GM12878 (cell line): ENCODE measurements at regions of chr15 and their contacts with region 1.

Region 1: DNA sequence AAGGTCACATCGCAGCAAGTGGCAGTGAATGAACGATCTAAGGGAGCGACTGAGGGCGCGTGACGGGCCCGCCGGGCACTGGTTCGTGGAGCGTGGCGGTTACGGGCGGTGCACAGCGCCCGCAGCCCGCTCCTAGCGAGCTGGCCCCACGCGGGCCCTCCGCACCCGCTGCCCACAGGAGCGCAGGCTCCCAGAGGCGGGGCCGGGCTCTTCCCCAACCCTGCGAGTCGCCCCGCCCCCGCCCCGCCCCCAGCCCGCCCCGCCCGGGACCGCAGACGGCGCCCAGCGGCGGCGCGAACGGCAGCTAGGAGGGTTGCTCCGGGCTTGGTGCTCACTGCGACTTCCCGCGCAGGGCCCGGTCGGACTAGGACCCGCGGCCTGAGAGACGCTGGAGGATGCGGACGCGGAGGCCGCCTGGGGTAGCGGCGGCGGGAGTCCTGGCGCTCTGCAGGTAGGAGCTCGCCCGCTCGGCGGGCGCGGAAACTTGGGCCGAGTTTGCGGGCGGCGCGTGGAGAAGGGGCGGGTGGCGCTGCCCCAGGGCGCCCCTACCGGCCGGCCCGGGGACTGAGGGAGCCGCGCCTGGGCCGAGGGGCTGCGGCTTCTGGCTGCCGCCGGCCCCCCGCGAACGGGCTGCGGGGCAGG is at the start of gene C15orf39:
- DNase-seq: no peak
- ATAC-seq: peak; percentile 55
- H3K4me3 ChIP-seq: peak within 1 kb of the TSS; percentile 88
- H3K27ac ChIP-seq: peak within 1 kb of the TSS; percentile 98
- H3K4me1 ChIP-seq: peaks cover 38% of the 10 kb centered on the region
- H3K27me3 ChIP-seq: no peaks in the 10 kb centered on the region
- CTCF ChIP-seq: peak; percentile 63 to 71 (median 65); a peak in 5 of 6 replicates
- EP300 ChIP-seq: no peak
- POLR2A ChIP-seq: peak; percentile 84
- RAD21 ChIP-seq: peak; percentile 42
- polyA plus RNA-seq, gene C15orf39: 2.3 to 4.9 TPM

Region 2: GRCh38 chr15:75029378-75030022 is 172.2 kb before region 1 on chr15:
- CTCF ChIA-PET with region 1: interaction called, 95 read pairs
- POLR2A ChIA-PET with region 1: interaction called, 15 read pairs
- RAD21 ChIA-PET with region 1: interaction called, 65 read pairs
- SMC1A ChIA-PET with region 1: interaction called, 49 read pairs
- in situ Hi-C with region 1: no loop called
- intact Hi-C with region 1: loop called (anchors 1 kb)
- DNase-seq: no peak
- ATAC-seq: peak; percentile 90
- H3K4me3 ChIP-seq: 0 out of 2 replicates have a peak overlapping the region, but pooled peaks have one; percentile 26
- H3K27ac ChIP-seq: peak overlapping the region; percentile 74
- H3K4me1 ChIP-seq: peaks cover 49% of the 10 kb centered on the region
- H3K27me3 ChIP-seq: no peaks in the 10 kb centered on the region
- CTCF ChIP-seq: peak; percentile 89 to 97 (median 92); a peak in 5 of 6 replicates
- EP300 ChIP-seq: no peak
- POLR2A ChIP-seq: no peak
- RAD21 ChIP-seq: peak; percentile 98

Region 3: DNA sequence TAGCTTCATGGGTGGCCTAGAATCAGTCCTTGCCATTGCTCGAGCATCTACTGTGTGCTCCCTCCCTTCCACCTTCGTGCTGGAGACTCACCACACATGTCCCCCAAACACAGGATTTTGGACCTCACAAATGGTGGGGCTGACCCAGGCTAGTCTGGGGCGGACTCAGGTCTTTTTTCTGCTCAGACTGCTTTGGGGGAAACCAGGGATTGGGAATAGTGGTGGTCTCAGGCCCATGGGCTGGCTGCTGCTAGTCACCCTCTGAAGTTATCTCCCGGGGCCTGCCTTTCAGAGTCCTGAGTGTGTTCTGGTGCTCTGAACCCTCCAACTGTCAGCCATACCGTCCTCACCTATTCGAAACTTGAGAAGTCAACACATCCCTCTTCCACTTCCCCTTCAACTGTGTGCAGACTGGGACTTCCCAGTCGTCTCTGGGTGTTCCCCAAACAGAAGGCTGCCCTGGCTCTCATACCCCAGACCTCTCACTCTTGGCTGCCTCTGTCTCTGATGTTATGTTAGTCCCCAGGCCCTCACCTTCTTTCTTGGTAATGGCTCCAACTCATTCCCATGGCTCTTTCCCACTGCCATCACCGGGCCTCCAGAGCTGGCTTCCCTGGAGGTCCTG is 132.3 kb before region 1 on chr15:
- CTCF ChIA-PET with region 1: interaction called, 21 read pairs
- POLR2A ChIA-PET with region 1: interaction called, 55 read pairs
- RAD21 ChIA-PET with region 1: interaction called, 44 read pairs
- SMC1A ChIA-PET with region 1: interaction called, 39 read pairs
- in situ Hi-C with region 1: no loop called
- intact Hi-C with region 1: no loop called
- DNase-seq: peak; percentile 87
- ATAC-seq: peak; percentile 92
- H3K4me3 ChIP-seq: no peak overlapping the region
- H3K27ac ChIP-seq: peak overlapping the region; percentile 89
- H3K4me1 ChIP-seq: peaks cover 58% of the 10 kb centered on the region
- H3K27me3 ChIP-seq: no peaks in the 10 kb centered on the region
- CTCF ChIP-seq: no peak
- EP300 ChIP-seq: peak; percentile 90 to 91; a peak in 3 of 4 replicates
- POLR2A ChIP-seq: peak; percentile 65
- RAD21 ChIP-seq: no peak; the same call in 1 of the 2 replicates

Region 4: DNA sequence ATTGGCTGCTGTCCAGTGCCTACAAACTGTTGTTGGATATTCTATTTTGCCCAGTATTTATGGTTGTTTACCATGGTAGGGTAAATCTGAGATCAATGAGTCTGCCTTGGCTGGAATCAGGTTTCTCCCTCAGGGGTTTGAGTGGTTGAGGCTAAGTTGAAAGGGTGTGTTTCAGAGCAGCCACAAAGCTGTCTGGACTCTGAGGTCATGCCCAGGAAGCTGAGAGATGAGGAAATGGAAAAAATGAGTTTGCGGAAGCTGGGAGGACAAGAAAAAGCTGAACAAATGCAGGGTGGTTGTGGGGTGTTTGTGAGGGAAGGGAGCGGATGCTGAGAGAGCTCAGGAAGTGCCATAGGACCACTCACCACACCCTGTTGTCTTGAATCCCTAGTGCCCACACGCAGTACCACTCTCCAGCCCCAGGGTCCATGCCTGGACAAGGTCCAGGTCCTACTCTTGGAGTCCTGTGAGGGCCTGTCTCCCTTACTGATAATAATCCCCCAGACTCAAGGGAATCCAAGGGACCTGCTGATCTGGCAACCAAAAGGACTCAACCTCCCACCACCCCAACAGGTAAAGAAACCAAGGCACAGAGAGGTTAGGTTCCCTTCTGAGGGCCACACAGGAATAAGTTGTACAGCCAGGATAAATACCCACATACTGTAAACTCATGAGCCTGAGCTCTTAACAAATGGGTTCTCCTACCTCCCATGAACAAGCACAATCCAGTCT is 96.8 kb before region 1 on chr15:
- CTCF ChIA-PET with region 1: interaction called, 10 read pairs
- POLR2A ChIA-PET with region 1: interaction called, 13 read pairs
- RAD21 ChIA-PET with region 1: interaction called, 16 read pairs
- SMC1A ChIA-PET with region 1: interaction called, 40 read pairs
- in situ Hi-C with region 1: loop called (anchors 5 kb)
- intact Hi-C with region 1: no loop called
- DNase-seq: peak; percentile 88
- ATAC-seq: peak; percentile 73
- H3K4me3 ChIP-seq: no peak overlapping the region
- H3K27ac ChIP-seq: peak overlapping the region; percentile 76
- H3K4me1 ChIP-seq: peaks cover 59% of the 10 kb centered on the region
- H3K27me3 ChIP-seq: no peaks in the 10 kb centered on the region
- CTCF ChIP-seq: 0 out of 6 replicates have a peak, but pooled peaks of 1 of the 3 experiments have one; percentile 6
- EP300 ChIP-seq: peak; percentile 61 to 76; a peak in 3 of 4 replicates
- POLR2A ChIP-seq: no peak; the same call in 1 of the 2 replicates
- RAD21 ChIP-seq: 0 out of 2 replicates have a peak, but pooled peaks have one; percentile 21

Region 5: GRCh38 chr15:75130597-75131268 is 71.0 kb before region 1 on chr15:
- CTCF ChIA-PET with region 1: interaction called, 36 read pairs
- POLR2A ChIA-PET with region 1: interaction called, 30 read pairs
- RAD21 ChIA-PET with region 1: interaction called, 34 read pairs
- SMC1A ChIA-PET with region 1: interaction called, 43 read pairs
- in situ Hi-C with region 1: loop called (anchors 5 kb)
- intact Hi-C with region 1: loop called (anchors 2 kb)
- DNase-seq: peak; percentile 89
- ATAC-seq: peak; percentile 92
- H3K4me3 ChIP-seq: peak overlapping the region; percentile 13; the same call in 1 of the 2 replicates
- H3K27ac ChIP-seq: peak overlapping the region; percentile 99
- H3K4me1 ChIP-seq: peaks cover 67% of the 10 kb centered on the region
- H3K27me3 ChIP-seq: no peaks in the 10 kb centered on the region
- CTCF ChIP-seq: no peak
- EP300 ChIP-seq: peak; percentile 55 to 82; a peak in 3 of 4 replicates
- POLR2A ChIP-seq: no peak
- RAD21 ChIP-seq: 0 out of 2 replicates have a peak, but pooled peaks have one; percentile 9